Body of pancreas (tissue), 4 donors: ENCODE measurements at regions of chr16 and their contacts with region 1.

Region 1: DNA sequence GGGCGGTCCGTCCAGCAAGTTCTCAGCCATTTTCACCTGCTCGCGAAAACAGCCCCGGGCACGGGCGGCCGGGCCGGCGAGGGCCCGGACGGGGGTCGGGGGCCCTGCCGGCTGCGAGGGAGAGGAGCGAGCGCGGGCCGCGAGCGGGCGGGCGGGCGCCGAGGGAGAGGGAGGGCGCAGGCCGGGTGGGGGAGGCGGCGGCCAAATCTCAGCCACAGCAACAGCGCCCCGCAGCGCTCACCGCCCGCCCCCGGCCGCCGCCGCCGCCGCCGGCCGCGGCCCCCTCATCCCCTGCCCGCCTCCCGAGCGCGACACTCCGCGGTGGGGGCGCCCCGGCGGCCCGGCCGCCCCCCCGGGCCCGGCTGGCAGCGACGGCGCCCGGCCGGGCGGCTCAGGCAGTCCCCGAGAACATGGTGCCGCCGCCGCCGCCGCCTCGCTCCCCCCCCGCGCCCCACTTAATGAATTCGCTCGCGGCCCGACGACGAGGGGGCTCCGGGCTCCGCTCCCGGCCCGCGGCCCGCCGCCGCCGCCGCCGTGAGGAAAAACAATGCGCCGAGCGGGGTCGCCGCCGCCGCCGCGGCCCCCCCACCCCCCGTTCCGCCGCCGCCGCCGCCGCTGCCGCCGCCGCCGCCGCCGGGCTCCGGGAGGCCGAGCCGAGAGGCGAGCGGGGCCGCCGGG is 487 bp downstream of the CREBBP start:
- DNase-seq: peak; percentile 78 to 85 (median 82)
- ATAC-seq: peak; percentile 81
- H3K4me3 ChIP-seq: peak overlapping the region; percentile 31 to 52
- H3K27ac ChIP-seq: peak overlapping the region; percentile 78 to 94 (median 82)
- H3K4me1 ChIP-seq: peaks cover 43% of the 10 kb centered on the region
- H3K27me3 ChIP-seq: no peaks in the 10 kb centered on the region
- CTCF ChIP-seq: peak in 4 of 7 experiments; percentile 10 to 50 (median 38)
- POLR2A ChIP-seq: no peak

Region 2: GRCh38 chr16:3690470-3690928 is 189.5 kb before region 1 on chr16:
- intact Hi-C with region 1: loop called (anchors 10 kb)
- DNase-seq: peak; percentile 91 to 93 (median 92)
- ATAC-seq: peak; percentile 96
- H3K4me3 ChIP-seq: no peak overlapping the region
- H3K27ac ChIP-seq: peak overlapping the region in 3 of 4 donors; percentile 37 to 50 (median 45)
- H3K4me1 ChIP-seq: peaks cover 25% of the 10 kb centered on the region
- H3K27me3 ChIP-seq: no peaks in the 10 kb centered on the region
- CTCF ChIP-seq: peak; percentile 85 to 97 (median 94)
- POLR2A ChIP-seq: peak in 2 of 3 donors; percentile 22 to 27

Region 3: GRCh38 chr16:3729161-3730112 is 150.6 kb before region 1 on chr16:
- intact Hi-C with region 1: loop called (anchors 10 kb)
- DNase-seq: no peak
- ATAC-seq: no peak
- H3K4me3 ChIP-seq: no peak overlapping the region
- H3K27ac ChIP-seq: no peak overlapping the region
- H3K4me1 ChIP-seq: no peaks in the 10 kb centered on the region
- H3K27me3 ChIP-seq: no peaks in the 10 kb centered on the region
- CTCF ChIP-seq: no peak
- POLR2A ChIP-seq: no peak

Region 4: GRCh38 chr16:3780570-3780969 is 99.5 kb before region 1 on chr16:
- intact Hi-C with region 1: loop called (anchors 10 kb)
- DNase-seq: no peak
- ATAC-seq: peak; percentile 35
- H3K4me3 ChIP-seq: no peak overlapping the region
- H3K27ac ChIP-seq: no peak overlapping the region
- H3K4me1 ChIP-seq: peaks cover 7% of the 10 kb centered on the region
- H3K27me3 ChIP-seq: no peaks in the 10 kb centered on the region
- CTCF ChIP-seq: peak in 1 of 7 experiments; percentile 9
- POLR2A ChIP-seq: no peak

Region 5: GRCh38 chr16:4538350-4539235 is 658.6 kb after region 1 on chr16 and contains the start of gene CDIP1:
- intact Hi-C with region 1: no loop called
- DNase-seq: peak; percentile 98
- ATAC-seq: peak; percentile 88
- H3K4me3 ChIP-seq: peak within 1 kb of the TSS; percentile 47 to 49
- H3K27ac ChIP-seq: peak within 1 kb of the TSS; percentile 83 to 94 (median 91)
- H3K4me1 ChIP-seq: peaks cover 41% of the 10 kb centered on the region
- H3K27me3 ChIP-seq: no peaks in the 10 kb centered on the region
- CTCF ChIP-seq: peak in 4 of 7 experiments; percentile 19 to 42 (median 22)
- POLR2A ChIP-seq: peak; percentile 94 to 95 (median 95)
- total RNA-seq, gene CDIP1: 12.9 to 23.3 TPM